ENCODE measurements at regions of chr16 and their contacts with region 1.

Region 1: DNA sequence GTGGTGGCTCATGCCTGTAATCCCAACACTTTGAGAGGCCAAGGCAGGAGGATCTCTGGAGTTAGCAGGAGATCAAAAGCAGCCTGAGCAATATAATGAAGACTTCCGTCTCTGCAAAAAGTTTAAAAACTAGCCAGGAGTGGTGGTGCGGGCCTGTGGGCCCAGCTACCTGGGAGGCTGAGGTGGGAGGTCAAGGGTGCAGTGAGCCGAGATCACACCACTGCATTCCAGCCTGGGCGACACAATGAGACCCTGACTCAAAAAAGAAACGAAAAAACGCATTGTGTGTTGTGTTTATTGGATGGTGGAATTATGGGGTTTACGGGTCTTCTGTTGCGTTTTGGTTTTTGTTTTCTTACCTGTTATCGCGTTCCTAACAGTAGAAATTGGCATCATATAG is 863 bp upstream of the DDX19A start:
- DNase-seq: no peak
- ATAC-seq: no peak
- H3K4me3 ChIP-seq: peak overlapping the region; percentile 89 to 99 (median 90)
- H3K27ac ChIP-seq: peak overlapping the region; percentile 84
- H3K4me1 ChIP-seq: peaks cover 38% of the 10 kb centered on the region
- H3K27me3 ChIP-seq: no peaks in the 10 kb centered on the region; a peak in 1 of 5 replicates
- CTCF ChIP-seq: no peak
- EP300 ChIP-seq: no peak
- POLR2A ChIP-seq: 0 out of 4 replicates have a peak, but pooled peaks of 1 of the 2 experiments have one; percentile 16
- RAD21 ChIP-seq: no peak

Region 2: GRCh38 chr16:70298988-70299938 is 46.6 kb before region 1 on chr16 and contains the start of gene DDX19B:
- CTCF ChIA-PET with region 1: no interaction called
- POLR2A ChIA-PET with region 1: interaction called, 58 read pairs
- in situ Hi-C with region 1: no loop called
- intact Hi-C with region 1: loop called (anchors 2 kb)
- DNase-seq: peak; percentile 90
- ATAC-seq: peak; percentile 92
- H3K4me3 ChIP-seq: peak within 1 kb of the TSS; percentile 75 to 91 (median 75)
- H3K27ac ChIP-seq: peak within 1 kb of the TSS; percentile 95
- H3K4me1 ChIP-seq: peaks cover 52% of the 10 kb centered on the region
- H3K27me3 ChIP-seq: no peaks in the 10 kb centered on the region
- CTCF ChIP-seq: peak; percentile 16; the same call in 1 of the 2 replicates
- EP300 ChIP-seq: peak in 1 of 2 experiments; percentile 70; a peak in 3 of 4 replicates
- POLR2A ChIP-seq: peak; percentile 87 to 98
- RAD21 ChIP-seq: no peak; the same call in none of the 2 replicates
- total RNA-seq, gene DDX19B: 36.2 and 45.1 TPM in 2 replicates

Region 3: GRCh38 chr16:70364399-70364798 is 18.6 kb after region 1 on chr16:
- CTCF ChIA-PET with region 1: no interaction called
- POLR2A ChIA-PET with region 1: interaction called, 11 read pairs
- in situ Hi-C with region 1: no loop called
- intact Hi-C with region 1: no loop called
- DNase-seq: no peak
- ATAC-seq: peak; percentile 23; the same call in 1 of the 3 replicates
- H3K4me3 ChIP-seq: no peak overlapping the region
- H3K27ac ChIP-seq: no peak overlapping the region
- H3K4me1 ChIP-seq: no peaks in the 10 kb centered on the region
- H3K27me3 ChIP-seq: no peaks in the 10 kb centered on the region
- CTCF ChIP-seq: no peak
- EP300 ChIP-seq: no peak
- POLR2A ChIP-seq: no peak
- RAD21 ChIP-seq: no peak

Region 4: GRCh38 chr16:70395345-70395901 is 49.6 kb after region 1 on chr16:
- CTCF ChIA-PET with region 1: no interaction called
- POLR2A ChIA-PET with region 1: no interaction called
- in situ Hi-C with region 1: no loop called
- intact Hi-C with region 1: no loop called
- DNase-seq: peak; percentile 72
- ATAC-seq: peak; percentile 95
- H3K4me3 ChIP-seq: no peak overlapping the region
- H3K27ac ChIP-seq: no peak overlapping the region
- H3K4me1 ChIP-seq: peaks cover 4% of the 10 kb centered on the region; the same call in 1 of the 2 replicates
- H3K27me3 ChIP-seq: no peaks in the 10 kb centered on the region
- CTCF ChIP-seq: peak; percentile 99
- EP300 ChIP-seq: no peak
- POLR2A ChIP-seq: no peak
- RAD21 ChIP-seq: peak; percentile 99